SK-N-SH (cell line): ENCODE measurements at regions of chr14 and their contacts with region 1.

Region 1: GRCh38 chr14:104078031-104078455 is 7.5 kb upstream of the ASPG start:
- DNase-seq: peak; percentile 92
- H3K4me3 ChIP-seq: peak overlapping the region in 1 of 2 experiments; percentile 33; a peak in 1 of 4 replicates
- H3K27ac ChIP-seq: no peak overlapping the region
- H3K4me1 ChIP-seq: peaks cover 0 to 10% of the 10 kb centered on the region in 2 experiments; a peak in 1 of 4 replicates
- H3K27me3 ChIP-seq: no peaks in the 10 kb centered on the region; the same call in 1 of the 2 replicates
- CTCF ChIP-seq: peak; percentile 99
- EP300 ChIP-seq: no peak
- RAD21 ChIP-seq: peak; percentile 98

Region 2: DNA sequence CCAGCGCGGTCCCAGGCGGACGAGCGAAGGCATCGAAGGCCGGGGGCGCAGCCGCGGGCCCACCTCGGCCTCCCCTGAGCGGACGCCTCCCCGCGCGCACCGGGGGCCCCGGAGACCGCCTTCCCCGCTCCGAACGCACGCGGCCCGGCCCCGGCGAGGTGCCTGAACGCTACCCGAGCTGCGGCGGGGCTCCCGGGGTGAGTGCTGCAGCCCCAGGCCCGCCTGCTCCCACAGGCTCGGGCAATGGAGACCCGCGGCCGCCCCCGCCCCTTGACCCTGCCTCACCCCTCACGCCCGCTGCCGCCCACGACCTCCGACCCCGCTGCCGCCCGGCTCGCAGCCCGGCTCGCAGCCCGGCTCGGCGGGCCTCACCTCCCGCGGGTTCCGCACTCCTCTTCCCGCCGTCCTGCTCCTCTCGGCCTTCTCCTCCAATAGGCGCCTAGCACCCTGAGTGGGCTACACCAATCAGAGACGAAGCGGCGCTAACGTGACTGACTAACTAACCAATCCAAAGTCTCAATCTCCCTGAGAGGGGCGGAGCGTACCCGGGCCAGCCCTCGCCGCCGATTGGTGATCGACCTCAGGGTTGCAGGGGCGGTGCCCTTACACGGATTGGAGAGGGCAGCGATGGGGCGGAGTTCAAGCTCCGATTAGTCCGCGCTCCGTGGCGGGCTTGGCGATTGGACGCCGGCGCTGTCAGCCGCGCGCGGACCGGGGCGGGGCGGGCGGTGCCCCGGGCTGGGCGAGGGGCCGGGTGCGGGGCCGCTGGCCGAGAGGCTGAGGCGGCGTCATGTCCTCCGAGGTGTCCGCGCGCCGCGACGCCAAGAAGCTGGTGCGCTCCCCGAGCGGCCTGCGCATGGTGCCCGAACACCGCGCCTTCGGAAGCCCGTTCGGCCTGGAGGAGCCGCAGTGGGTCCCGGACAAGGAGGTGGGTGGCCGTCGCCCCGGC is 362.7 kb before region 1 on chr14 and contains the starts of genes XRCC3 and ZFYVE21:
- CTCF ChIA-PET with region 1: no interaction called
- POLR2A ChIA-PET with region 1: no interaction called
- DNase-seq: peak; percentile 100
- H3K4me3 ChIP-seq: peak within 1 kb of the TSS; percentile 69 to 76
- H3K27ac ChIP-seq: peak within 1 kb of the TSS; percentile 44 to 55
- H3K4me1 ChIP-seq: peaks cover 11 to 39% of the 10 kb centered on the region in 2 experiments; a peak in 2 of 4 replicates
- H3K27me3 ChIP-seq: no peaks in the 10 kb centered on the region
- CTCF ChIP-seq: no peak
- EP300 ChIP-seq: no peak
- RAD21 ChIP-seq: no peak
- polyA plus RNA-seq, gene XRCC3: 10.7 and 11.7 TPM in 2 replicates
- polyA plus RNA-seq, gene ZFYVE21: 82.1 and 85.3 TPM in 2 replicates

Region 3: GRCh38 chr14:103808403-103809001 is 269.5 kb before region 1 on chr14:
- CTCF ChIA-PET with region 1: interaction called, 14 read pairs
- POLR2A ChIA-PET with region 1: no interaction called
- DNase-seq: peak; percentile 80
- H3K4me3 ChIP-seq: no peak overlapping the region
- H3K27ac ChIP-seq: no peak overlapping the region
- H3K4me1 ChIP-seq: peaks cover 0 to 4% of the 10 kb centered on the region in 2 experiments; a peak in 1 of 4 replicates
- H3K27me3 ChIP-seq: no peaks in the 10 kb centered on the region
- CTCF ChIP-seq: peak; percentile 94
- EP300 ChIP-seq: no peak
- RAD21 ChIP-seq: peak; percentile 93

Region 4: DNA sequence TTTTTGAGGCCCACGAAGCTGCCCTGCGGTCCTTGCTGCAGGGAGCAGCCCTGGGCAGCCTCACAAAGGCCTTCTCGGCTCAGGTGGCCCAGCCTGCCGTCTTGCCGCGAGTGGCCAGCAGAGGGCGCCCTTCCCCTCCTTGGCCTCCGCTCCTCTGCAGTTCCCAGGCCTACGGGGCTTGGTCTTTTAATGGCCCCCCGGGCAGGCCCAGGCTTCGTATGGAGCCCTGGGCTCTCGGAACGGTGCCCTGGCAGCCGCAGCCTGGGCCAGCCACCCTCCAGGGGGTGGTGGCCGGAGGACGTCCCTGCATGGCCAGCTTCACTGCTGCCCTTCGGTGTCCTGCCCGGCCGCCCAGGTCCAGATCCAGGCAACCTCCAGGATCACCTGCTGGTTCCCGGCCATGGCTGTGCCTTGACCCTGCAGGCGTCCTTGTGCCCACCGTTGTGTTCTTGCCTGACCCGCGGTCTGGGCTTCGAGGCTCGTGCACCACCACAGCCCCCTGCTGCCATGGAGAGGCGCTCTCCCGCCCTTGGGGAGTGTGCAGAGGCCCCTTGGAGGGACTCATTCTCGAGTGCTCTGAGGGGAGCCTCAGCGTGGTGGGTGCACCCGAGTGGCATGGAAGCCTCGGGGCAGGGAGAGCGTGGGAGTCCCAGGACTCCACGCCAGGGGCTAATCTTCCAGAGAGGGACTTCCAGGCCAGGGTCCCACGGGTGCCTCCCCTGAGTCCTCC is 16.8 kb after region 1 on chr14:
- CTCF ChIA-PET with region 1: interaction called, 61 read pairs
- POLR2A ChIA-PET with region 1: no interaction called
- DNase-seq: peak; percentile 92
- H3K4me3 ChIP-seq: no peak overlapping the region; a peak in 1 of 4 replicates
- H3K27ac ChIP-seq: no peak overlapping the region; a peak in 1 of 4 replicates
- H3K4me1 ChIP-seq: peaks cover 0 to 13% of the 10 kb centered on the region in 2 experiments; a peak in 1 of 4 replicates
- H3K27me3 ChIP-seq: no peaks in the 10 kb centered on the region
- CTCF ChIP-seq: peak; percentile 82
- EP300 ChIP-seq: no peak
- RAD21 ChIP-seq: peak; percentile 69

Region 5: DNA sequence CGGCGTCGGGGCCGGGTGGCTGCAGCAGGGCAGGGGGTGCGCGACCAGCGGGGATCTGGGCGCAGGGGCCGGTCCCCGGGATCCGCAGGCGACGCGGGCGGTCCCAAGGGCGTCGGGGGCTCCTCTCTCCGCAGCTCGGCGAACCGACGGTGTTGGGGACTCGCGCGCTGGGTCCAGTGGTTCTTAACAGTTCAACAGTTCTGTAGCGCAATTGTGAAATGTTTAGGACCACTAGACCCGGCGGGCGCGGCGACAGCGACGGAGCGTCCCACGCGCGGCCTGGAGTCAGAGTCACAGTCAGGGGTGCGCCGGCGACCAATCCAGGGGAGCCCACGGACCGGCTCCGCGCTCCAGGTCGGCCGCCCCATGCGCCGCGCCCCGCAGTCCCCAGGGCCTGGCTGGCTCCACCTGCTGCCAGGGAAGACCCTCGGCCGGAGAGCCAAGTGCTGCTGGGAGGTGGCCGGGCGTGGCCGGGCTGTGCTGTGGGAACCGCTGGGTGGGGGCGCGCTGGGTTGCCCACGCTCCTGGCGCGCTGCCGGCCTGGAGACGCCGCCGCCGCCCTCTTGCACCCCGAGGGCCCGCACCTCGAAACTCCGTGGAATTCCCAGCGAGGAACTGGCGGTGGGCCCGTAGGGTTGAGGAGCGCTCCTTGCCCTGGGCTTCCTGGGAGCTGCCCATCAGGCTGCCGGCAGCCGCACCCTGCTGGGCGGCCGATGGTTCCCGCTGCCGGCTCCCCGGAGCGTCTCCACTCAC is 39.4 kb after region 1 on chr14:
- CTCF ChIA-PET with region 1: interaction called, 22 read pairs
- POLR2A ChIA-PET with region 1: no interaction called
- DNase-seq: peak; percentile 15
- H3K4me3 ChIP-seq: no peak overlapping the region
- H3K27ac ChIP-seq: no peak overlapping the region
- H3K4me1 ChIP-seq: no peaks in the 10 kb centered on the region
- H3K27me3 ChIP-seq: no peaks in the 10 kb centered on the region
- CTCF ChIP-seq: no peak
- EP300 ChIP-seq: no peak
- RAD21 ChIP-seq: no peak

Region 6: DNA sequence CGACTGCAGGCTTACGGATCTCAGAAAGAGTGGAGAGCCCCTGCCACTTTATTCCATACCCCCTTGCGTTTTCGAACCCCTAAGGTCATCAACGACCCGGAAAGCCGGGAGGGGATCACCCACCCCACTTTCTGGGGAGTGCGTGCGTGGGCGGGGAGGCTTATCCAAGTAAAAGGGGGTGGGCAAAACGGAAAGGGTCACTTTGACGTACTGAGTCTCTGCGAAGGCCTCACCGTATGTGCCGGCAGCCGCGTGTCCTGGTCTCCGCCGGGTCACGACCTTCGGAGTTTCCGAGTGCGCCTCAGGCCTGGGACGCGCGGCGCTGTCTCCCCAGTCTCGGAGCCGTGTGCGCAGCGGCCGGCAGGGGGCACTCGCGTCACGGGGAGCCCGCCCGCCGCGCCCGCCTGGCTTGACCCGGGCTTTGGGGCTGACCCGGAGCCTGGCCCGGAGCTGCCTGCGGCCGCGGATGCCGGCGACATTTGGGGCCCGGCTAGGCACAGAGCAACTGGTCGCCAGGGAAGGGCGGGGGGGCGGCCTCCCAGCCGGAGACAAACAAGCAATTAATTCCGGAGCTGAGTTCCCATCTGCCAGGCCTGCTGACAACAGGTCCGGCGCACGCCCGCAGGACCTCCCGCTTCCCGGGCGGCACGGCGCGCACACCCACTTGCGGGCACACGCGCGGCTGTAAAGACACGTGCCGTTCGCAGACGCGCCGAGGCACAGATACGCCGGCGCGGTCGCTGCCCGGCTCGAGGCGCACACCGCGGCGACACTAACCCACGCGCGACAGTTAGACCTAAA is 59.5 kb after region 1 on chr14:
- CTCF ChIA-PET with region 1: interaction called, 166 read pairs
- POLR2A ChIA-PET with region 1: no interaction called
- DNase-seq: peak; percentile 92
- H3K4me3 ChIP-seq: peak overlapping the region; percentile 51 to 70
- H3K27ac ChIP-seq: peak overlapping the region in 1 of 2 experiments; percentile 90; a peak in 2 of 4 replicates
- H3K4me1 ChIP-seq: peaks cover 0 to 56% of the 10 kb centered on the region in 2 experiments; a peak in 1 of 4 replicates
- H3K27me3 ChIP-seq: peaks cover 17% of the 10 kb centered on the region
- CTCF ChIP-seq: peak; percentile 75
- EP300 ChIP-seq: peak in 1 of 2 experiments; percentile 44; a peak in 1 of 4 replicates
- RAD21 ChIP-seq: peak; percentile 86